Right cardiac atrium (tissue), 5 donors: ENCODE measurements at regions of chr19 and their contacts with region 1.

Region 1: GRCh38 chr19:2887391-2887914 is 13.3 kb upstream of the ZNF57 start:
- DNase-seq: peak in 1 of 3 donors; percentile 31
- ATAC-seq: peak; percentile 77 to 78
- H3K4me3 ChIP-seq: no peak overlapping the region
- H3K27ac ChIP-seq: no peak overlapping the region
- H3K4me1 ChIP-seq: no peaks in the 10 kb centered on the region
- H3K27me3 ChIP-seq: no peaks in the 10 kb centered on the region

Region 2: GRCh38 chr19:2944775-2945574 is 57.5 kb after region 1 on chr19 and contains the start of gene ZNF77:
- intact Hi-C with region 1: loop called in 1 of 4 experiments (anchors 5 kb)
- DNase-seq: peak; percentile 99 to 100 (median 99)
- ATAC-seq: peak; percentile 96 to 99
- H3K4me3 ChIP-seq: peak within 1 kb of the TSS; percentile 77
- H3K27ac ChIP-seq: peak within 1 kb of the TSS; percentile 71
- H3K4me1 ChIP-seq: peaks cover 6% of the 10 kb centered on the region
- H3K27me3 ChIP-seq: no peaks in the 10 kb centered on the region
- total RNA-seq, gene ZNF77: 2.1 to 4.0 (median 2.9) TPM

Region 3: GRCh38 chr19:3062168-3063102 is 175.0 kb after region 1 on chr19 and contains the start of gene TLE5:
- intact Hi-C with region 1: no loop called
- DNase-seq: peak; percentile 78 to 93 (median 91)
- ATAC-seq: peak; percentile 55 to 58
- H3K4me3 ChIP-seq: peak within 1 kb of the TSS; percentile 98
- H3K27ac ChIP-seq: peak within 1 kb of the TSS; percentile 98
- H3K4me1 ChIP-seq: peaks cover 7% of the 10 kb centered on the region
- H3K27me3 ChIP-seq: no peaks in the 10 kb centered on the region
- total RNA-seq, gene TLE5: 784 to 1,020 (median 971) TPM